ENCODE measurements at regions of chr4 and their contacts with region 1.

Region 1: GRCh38 chr4:82373816-82374625 is at the start of gene HNRNPD:
- DNase-seq: peak; percentile 97 to 99 (median 98)
- ATAC-seq: peak; percentile 90 to 96 (median 92)
- H3K4me3 ChIP-seq: peak within 1 kb of the TSS; percentile 85 to 94 (median 89)
- H3K27ac ChIP-seq: peak within 1 kb of the TSS; percentile 93 to 100 (median 97)
- H3K4me1 ChIP-seq: peaks cover 0 to 33% (median 14%) of the 10 kb centered on the region in 4 donors
- H3K27me3 ChIP-seq: no peaks in the 10 kb centered on the region
- CTCF ChIP-seq: no peak
- POLR2A ChIP-seq: peak; percentile 94
- total RNA-seq, gene HNRNPD: 34.5 to 67.1 (median 42.6) TPM

Region 2: DNA sequence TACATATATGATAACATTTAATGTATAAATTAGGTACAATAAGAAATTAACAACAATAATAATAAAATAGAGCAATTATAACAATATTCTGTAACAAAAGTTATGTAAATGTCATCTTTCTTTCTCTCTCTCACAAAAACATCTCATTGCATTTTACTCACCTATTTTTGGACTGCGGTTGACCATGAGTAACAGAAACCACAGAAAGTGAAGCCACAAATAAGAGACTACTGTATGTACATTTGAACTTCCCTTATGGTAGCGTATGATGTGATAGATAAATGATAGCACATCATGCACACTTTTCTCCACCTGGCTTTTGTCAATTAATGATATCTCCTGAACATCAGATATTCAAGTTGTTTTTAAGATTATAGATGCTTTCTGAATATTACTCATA is 80.7 kb before region 1 on chr4:
- intact Hi-C with region 1: no loop called
- DNase-seq: no peak
- ATAC-seq: no peak
- H3K4me3 ChIP-seq: no peak overlapping the region
- H3K27ac ChIP-seq: no peak overlapping the region
- H3K4me1 ChIP-seq: no peaks in the 10 kb centered on the region
- H3K27me3 ChIP-seq: no peaks in the 10 kb centered on the region
- CTCF ChIP-seq: no peak
- POLR2A ChIP-seq: no peak

Region 3: DNA sequence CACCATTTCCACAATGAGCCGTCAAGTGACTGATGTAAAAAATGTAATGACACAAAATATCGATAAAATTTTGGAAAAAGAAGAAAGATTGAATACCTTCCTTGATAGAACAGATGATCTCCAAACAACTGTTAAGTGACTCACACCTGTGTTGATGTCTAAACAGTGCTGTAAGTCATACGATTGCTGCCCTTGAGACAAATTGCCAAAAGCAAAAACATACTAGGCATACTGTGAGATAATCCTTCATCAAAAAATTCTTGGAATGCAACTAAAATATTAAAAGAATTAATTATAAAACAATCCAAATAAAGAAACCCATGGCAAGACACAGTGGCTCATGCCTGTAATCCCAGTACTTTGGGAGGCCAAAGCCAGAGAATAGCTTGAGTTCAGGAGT is 53.7 kb before region 1 on chr4:
- intact Hi-C with region 1: no loop called
- DNase-seq: no peak
- ATAC-seq: no peak
- H3K4me3 ChIP-seq: no peak overlapping the region
- H3K27ac ChIP-seq: no peak overlapping the region
- H3K4me1 ChIP-seq: no peaks in the 10 kb centered on the region
- H3K27me3 ChIP-seq: no peaks in the 10 kb centered on the region
- CTCF ChIP-seq: no peak
- POLR2A ChIP-seq: no peak

Region 4: GRCh38 chr4:82428969-82429727 is 55.1 kb after region 1 on chr4:
- intact Hi-C with region 1: loop called (anchors 5 to 10 kb)
- DNase-seq: peak; percentile 95
- ATAC-seq: peak; percentile 78 to 85 (median 82)
- H3K4me3 ChIP-seq: peak overlapping the region; percentile 84 to 94 (median 87)
- H3K27ac ChIP-seq: peak overlapping the region; percentile 93 to 95 (median 93)
- H3K4me1 ChIP-seq: peaks cover 0 to 26% (median 6%) of the 10 kb centered on the region in 4 donors
- H3K27me3 ChIP-seq: no peaks in the 10 kb centered on the region
- CTCF ChIP-seq: peak; percentile 94 to 98 (median 96)
- POLR2A ChIP-seq: peak; percentile 82

Measured in right lobe of liver (tissue), 6 donors.